ENCODE measurements at regions of chr20 and their contacts with region 1.

Region 1: DNA sequence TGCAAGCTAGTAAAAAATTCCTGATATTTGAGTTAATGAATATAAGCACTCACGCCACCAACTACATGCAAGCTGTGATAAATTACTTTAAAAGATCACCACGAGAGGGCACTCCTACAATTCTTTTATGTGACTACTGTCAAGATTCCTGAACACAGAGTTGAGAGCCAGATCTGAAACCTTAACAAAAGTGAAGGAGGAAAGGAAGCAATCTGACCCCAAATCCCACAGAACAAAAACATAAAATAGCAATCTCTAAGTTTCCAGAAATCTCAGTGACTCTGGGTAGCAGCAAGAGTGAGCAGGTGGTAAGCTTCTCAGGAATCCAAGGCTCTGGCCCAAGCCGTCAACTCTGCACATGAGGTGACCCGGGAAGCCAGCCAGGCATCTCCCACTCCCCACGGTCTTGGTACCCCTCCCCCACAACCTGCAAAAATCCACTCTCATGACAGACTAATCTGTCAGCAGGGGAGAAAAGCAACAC is 55.1 kb downstream of the STAU1 start:
- DNase-seq: no peak
- ATAC-seq: peak; percentile 89

Region 2: DNA sequence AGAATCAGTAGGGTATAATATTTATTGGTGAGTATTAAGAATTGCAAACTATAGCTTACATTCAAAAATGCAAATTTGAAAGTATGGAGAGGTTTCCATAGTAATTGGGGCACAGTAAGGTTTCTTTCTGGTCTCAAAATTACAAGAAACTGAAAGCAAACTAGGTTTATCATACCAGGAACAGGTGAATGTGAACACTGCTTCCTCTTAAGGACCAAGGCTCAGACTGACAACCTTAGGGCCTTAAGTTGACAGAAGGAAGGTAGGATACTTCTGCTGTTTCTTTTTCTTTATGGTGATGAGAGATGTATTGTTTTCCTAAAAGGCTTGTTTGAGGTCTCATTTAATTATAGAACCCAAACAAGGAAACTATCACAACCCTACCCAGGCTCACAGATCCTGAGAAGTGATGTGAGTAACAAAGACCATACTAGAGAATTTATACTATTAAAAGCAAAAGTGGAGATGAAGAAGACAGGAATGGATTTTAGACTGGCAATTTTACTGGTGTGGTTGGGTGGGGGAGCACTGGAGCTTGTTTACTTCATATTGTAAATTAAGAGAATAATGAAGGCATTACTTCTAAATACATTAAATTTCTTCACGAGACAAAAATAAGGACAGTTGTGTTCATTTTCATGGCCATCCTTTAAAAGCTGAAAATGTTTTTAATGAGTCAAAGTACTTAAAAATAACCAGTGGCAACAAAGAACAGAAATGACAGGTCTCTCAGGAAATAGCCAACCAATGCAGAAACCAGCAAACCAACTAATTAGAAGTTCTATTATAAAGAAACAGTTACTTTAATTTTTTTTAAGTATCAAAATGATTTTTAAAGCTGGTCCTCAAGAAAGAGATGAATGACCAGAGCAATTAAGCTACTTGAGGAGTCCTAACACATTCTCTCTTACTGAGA is 33.8 kb after region 1 on chr20:
- intact Hi-C with region 1: no loop called
- DNase-seq: no peak
- ATAC-seq: no peak

Region 3: GRCh38 chr20:49216991-49217578 is 84.0 kb after region 1 on chr20:
- intact Hi-C with region 1: loop called (anchors 2 kb)
- DNase-seq: peak; percentile 99
- ATAC-seq: peak; percentile 55